ENCODE measurements at regions of chr10 and their contacts with region 1.

Region 1: DNA sequence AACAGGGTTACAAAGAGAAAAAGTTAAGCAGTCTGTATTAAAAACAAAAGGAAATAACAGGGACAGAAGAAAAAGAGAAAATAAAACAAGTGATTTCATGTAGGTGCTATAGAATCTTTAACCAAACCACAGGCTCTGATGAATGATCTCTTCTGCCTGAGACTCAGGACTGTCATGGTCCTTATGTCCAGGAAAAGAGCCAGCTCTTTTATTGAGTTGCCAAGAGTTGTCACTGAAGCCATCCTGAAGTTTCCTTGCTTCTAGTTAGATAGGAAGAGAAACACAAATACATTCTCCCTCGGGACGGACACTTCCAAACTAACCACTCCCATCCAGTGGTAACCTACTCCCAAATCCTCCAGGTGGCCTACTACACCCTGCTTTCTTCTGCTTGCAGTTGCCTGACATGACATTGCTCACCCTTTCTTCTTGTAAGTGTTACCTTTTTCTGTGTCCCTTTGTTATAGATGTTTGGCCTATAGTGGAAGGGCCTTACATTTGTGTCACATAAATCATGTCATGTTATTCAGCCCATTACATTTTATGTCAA is 346.7 kb downstream of the NRG3 start:
- DNase-seq: peak; percentile 48
- H3K4me3 Mint-ChIP-seq: no peak overlapping the region
- H3K27ac Mint-ChIP-seq: no peak overlapping the region
- H3K4me1 Mint-ChIP-seq: peaks cover 6% of the 10 kb centered on the region
- H3K27me3 Mint-ChIP-seq: no peaks in the 10 kb centered on the region
- CTCF ChIP-seq: no peak

Region 2: GRCh38 chr10:82377608-82378007 is 155.9 kb after region 1 on chr10:
- CTCF ChIA-PET with region 1: interaction called, 5 read pairs
- POLR2A ChIA-PET with region 1: no interaction called
- intact Hi-C with region 1: loop called (anchors 5 kb)
- DNase-seq: peak; percentile 58
- H3K4me3 Mint-ChIP-seq: no peak overlapping the region
- H3K27ac Mint-ChIP-seq: no peak overlapping the region
- H3K4me1 Mint-ChIP-seq: peaks cover 15% of the 10 kb centered on the region
- H3K27me3 Mint-ChIP-seq: no peaks in the 10 kb centered on the region
- CTCF ChIP-seq: no peak